ENCODE measurements at regions of chr15 and their contacts with region 1.

Region 1: GRCh38 chr15:82855286-82856100 is 46.1 kb downstream of the WHAMM start:
- DNase-seq: no peak
- H3K4me3 ChIP-seq: no peak overlapping the region
- H3K27ac ChIP-seq: no peak overlapping the region
- H3K4me1 ChIP-seq: no peaks in the 10 kb centered on the region
- H3K27me3 ChIP-seq: no peaks in the 10 kb centered on the region

Region 2: GRCh38 chr15:82999905-83000671 is 144.6 kb after region 1 on chr15:
- in situ Hi-C with region 1: loop called (anchors 5 kb)
- DNase-seq: peak; percentile 82
- H3K4me3 ChIP-seq: peak overlapping the region; percentile 70
- H3K27ac ChIP-seq: no peak overlapping the region
- H3K4me1 ChIP-seq: 0 out of 2 replicates have a peak, but pooled peaks cover 3% of the 10 kb centered on the region
- H3K27me3 ChIP-seq: no peaks in the 10 kb centered on the region

Region 3: DNA sequence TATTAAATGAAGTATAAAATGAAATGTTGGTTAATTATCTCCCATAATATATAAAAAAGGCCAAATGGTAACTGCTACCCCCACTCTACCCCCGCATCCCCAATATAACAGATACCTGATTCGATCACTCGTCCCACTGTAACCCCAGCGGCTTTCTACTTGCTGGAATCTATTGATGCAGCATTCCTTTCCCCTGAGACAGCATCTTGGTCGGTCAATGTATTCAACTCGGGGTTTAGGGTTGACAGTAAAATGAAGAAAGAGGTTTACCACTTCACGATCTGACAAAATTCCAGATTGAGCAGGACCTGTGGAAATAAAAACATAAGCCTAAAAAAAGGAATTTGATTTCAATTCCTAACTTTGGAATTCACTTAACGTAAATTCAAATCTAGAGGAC is 174.5 kb after region 1 on chr15:
- in situ Hi-C with region 1: no loop called
- DNase-seq: no peak
- H3K4me3 ChIP-seq: no peak overlapping the region
- H3K27ac ChIP-seq: no peak overlapping the region
- H3K4me1 ChIP-seq: no peaks in the 10 kb centered on the region
- H3K27me3 ChIP-seq: no peaks in the 10 kb centered on the region

Region 4: DNA sequence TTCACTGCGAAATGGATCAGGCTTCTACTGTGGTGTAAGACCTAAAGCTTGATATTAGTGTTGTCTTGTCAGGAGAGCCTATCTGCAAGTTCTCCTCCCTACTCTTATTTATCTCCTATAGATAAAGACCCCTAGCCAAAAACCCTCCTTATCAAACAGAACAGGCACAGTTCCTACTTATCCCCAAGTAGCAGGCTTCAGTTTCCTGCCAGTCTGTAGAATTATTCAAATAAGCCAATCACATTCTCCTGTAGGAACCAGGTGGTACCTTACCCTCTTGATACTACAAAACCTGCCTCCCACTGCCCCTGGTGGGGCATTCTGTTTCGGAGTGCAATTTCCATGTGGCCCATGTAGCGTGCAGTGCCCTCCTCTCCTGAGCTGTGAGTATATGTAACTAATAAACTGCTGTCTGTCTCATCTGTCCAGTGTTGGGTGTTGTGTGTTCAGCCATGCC is 323.4 kb after region 1 on chr15:
- in situ Hi-C with region 1: no loop called
- DNase-seq: no peak
- H3K4me3 ChIP-seq: no peak overlapping the region
- H3K27ac ChIP-seq: no peak overlapping the region
- H3K4me1 ChIP-seq: no peaks in the 10 kb centered on the region
- H3K27me3 ChIP-seq: no peaks in the 10 kb centered on the region

Measured in GM23248 (cell line).